ENCODE measurements at regions of chr16 and their contacts with region 1.

Region 1: GRCh38 chr16:27515874-27516353 is 33.8 kb downstream of the GTF3C1 start:
- DNase-seq: peak; percentile 49
- ATAC-seq: peak; percentile 82
- H3K4me3 Mint-ChIP-seq: no peak overlapping the region
- H3K27ac Mint-ChIP-seq: no peak overlapping the region
- H3K4me1 Mint-ChIP-seq: no peaks in the 10 kb centered on the region
- H3K27me3 Mint-ChIP-seq: no peaks in the 10 kb centered on the region
- CTCF ChIP-seq: peak; percentile 66

Region 2: GRCh38 chr16:27526180-27526579 is 10.3 kb after region 1 on chr16:
- CTCF ChIA-PET with region 1: interaction called, 11 read pairs
- POLR2A ChIA-PET with region 1: no interaction called
- intact Hi-C with region 1: no loop called
- DNase-seq: no peak
- ATAC-seq: no peak
- H3K4me3 Mint-ChIP-seq: no peak overlapping the region
- H3K27ac Mint-ChIP-seq: no peak overlapping the region
- H3K4me1 Mint-ChIP-seq: no peaks in the 10 kb centered on the region
- H3K27me3 Mint-ChIP-seq: no peaks in the 10 kb centered on the region
- CTCF ChIP-seq: no peak

Region 3: GRCh38 chr16:27531826-27532800 is 16.2 kb after region 1 on chr16:
- CTCF ChIA-PET with region 1: interaction called, 12 read pairs
- POLR2A ChIA-PET with region 1: no interaction called
- intact Hi-C with region 1: no loop called
- DNase-seq: no peak
- ATAC-seq: no peak
- H3K4me3 Mint-ChIP-seq: no peak overlapping the region
- H3K27ac Mint-ChIP-seq: no peak overlapping the region
- H3K4me1 Mint-ChIP-seq: peaks cover 4% of the 10 kb centered on the region
- H3K27me3 Mint-ChIP-seq: no peaks in the 10 kb centered on the region
- CTCF ChIP-seq: no peak

Region 4: GRCh38 chr16:27549859-27550581 is 34.1 kb after region 1 on chr16 and contains the starts of genes GTF3C1 and KATNIP:
- CTCF ChIA-PET with region 1: interaction called, 12 read pairs
- POLR2A ChIA-PET with region 1: no interaction called
- intact Hi-C with region 1: no loop called
- DNase-seq: peak; percentile 100
- ATAC-seq: peak; percentile 99
- H3K4me3 Mint-ChIP-seq: peak within 1 kb of the TSS; percentile 92
- H3K27ac Mint-ChIP-seq: peak within 1 kb of the TSS; percentile 93
- H3K4me1 Mint-ChIP-seq: peaks cover 32% of the 10 kb centered on the region
- H3K27me3 Mint-ChIP-seq: no peaks in the 10 kb centered on the region
- CTCF ChIP-seq: no peak
- total RNA-seq, gene GTF3C1: 55.9 to 58.6 TPM
- total RNA-seq, gene KATNIP: 9.6 to 11.5 TPM

Region 5: GRCh38 chr16:27769561-27770255 is 253.8 kb after region 1 on chr16:
- CTCF ChIA-PET with region 1: no interaction called
- POLR2A ChIA-PET with region 1: no interaction called
- intact Hi-C with region 1: no loop called
- DNase-seq: no peak
- ATAC-seq: no peak
- H3K4me3 Mint-ChIP-seq: no peak overlapping the region
- H3K27ac Mint-ChIP-seq: no peak overlapping the region
- H3K4me1 Mint-ChIP-seq: no peaks in the 10 kb centered on the region
- H3K27me3 Mint-ChIP-seq: no peaks in the 10 kb centered on the region
- CTCF ChIP-seq: no peak

Measured in activated CD8-positive, alpha-beta T cell treated with anti-CD3 and anti-CD28 coated beads for 36 hours (primary cell).